Activated T-helper 1 cell treated with anti-CD3 and anti-CD28 coated beads, Interleukin-12 subunit alpha, Interleukin-12 subunit beta, Interleukin-2, Interleukin-4 antibody, amounts not matched to agents 30 ng/mL and 10 ng/mL and 1 ng/mL, durations not matched to agents 14 hours and 24 hours and 36 hours (primary cell): ENCODE measurements at regions of chr2 and their contacts with region 1.

Region 1: GRCh38 chr2:85538486-85539360 is at the start of gene MAT2A:
- DNase-seq: peak; percentile 88
- H3K4me3 Mint-ChIP-seq: peak within 1 kb of the TSS; percentile 99
- H3K27ac Mint-ChIP-seq: peak within 1 kb of the TSS; percentile 97
- H3K4me1 Mint-ChIP-seq: peaks cover 56% of the 10 kb centered on the region
- H3K27me3 Mint-ChIP-seq: no peaks in the 10 kb centered on the region
- total RNA-seq, gene MAT2A: 461 and 480 TPM in 2 replicates

Region 2: DNA sequence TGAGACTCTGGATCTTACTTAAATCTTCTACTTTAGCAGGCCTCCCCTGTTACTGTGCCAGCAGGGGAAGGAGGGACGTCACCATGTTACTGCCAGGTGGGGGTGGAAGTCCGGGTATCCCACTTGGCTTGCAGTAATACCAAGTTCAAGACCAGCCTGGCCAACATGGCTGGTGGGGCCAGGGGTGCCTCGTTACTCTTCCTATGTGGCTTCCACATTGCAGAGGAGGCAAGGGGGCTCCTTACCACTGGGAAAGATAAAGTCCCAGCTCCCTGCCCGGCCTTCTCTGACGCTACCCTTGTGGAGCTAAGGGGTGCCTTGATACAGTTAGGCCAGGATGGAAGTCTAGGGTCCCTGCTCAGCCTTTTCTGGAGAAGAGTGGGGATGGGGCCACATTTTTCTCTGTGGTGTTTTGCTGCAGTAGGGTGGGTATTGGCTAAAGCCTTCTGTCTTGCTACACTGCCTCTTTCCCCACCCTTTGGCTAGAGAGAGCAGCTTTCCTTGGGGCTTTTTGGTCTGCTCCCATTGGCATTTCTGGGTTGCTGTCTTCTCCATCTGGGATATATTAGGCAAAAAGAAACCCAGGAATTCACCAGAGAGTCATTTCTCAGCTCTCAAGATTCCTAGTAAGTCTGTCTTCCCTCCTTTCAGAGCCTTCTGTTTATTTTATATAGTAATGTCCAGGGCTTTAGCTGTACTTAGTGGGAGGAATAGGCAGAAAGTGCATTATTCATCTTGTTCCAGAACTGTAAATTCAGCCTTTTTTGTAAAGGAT is 162.2 kb before region 1 on chr2:
- intact Hi-C with region 1: no loop called
- DNase-seq: no peak
- H3K4me3 Mint-ChIP-seq: no peak overlapping the region
- H3K27ac Mint-ChIP-seq: no peak overlapping the region
- H3K4me1 Mint-ChIP-seq: no peaks in the 10 kb centered on the region
- H3K27me3 Mint-ChIP-seq: no peaks in the 10 kb centered on the region

Region 3: DNA sequence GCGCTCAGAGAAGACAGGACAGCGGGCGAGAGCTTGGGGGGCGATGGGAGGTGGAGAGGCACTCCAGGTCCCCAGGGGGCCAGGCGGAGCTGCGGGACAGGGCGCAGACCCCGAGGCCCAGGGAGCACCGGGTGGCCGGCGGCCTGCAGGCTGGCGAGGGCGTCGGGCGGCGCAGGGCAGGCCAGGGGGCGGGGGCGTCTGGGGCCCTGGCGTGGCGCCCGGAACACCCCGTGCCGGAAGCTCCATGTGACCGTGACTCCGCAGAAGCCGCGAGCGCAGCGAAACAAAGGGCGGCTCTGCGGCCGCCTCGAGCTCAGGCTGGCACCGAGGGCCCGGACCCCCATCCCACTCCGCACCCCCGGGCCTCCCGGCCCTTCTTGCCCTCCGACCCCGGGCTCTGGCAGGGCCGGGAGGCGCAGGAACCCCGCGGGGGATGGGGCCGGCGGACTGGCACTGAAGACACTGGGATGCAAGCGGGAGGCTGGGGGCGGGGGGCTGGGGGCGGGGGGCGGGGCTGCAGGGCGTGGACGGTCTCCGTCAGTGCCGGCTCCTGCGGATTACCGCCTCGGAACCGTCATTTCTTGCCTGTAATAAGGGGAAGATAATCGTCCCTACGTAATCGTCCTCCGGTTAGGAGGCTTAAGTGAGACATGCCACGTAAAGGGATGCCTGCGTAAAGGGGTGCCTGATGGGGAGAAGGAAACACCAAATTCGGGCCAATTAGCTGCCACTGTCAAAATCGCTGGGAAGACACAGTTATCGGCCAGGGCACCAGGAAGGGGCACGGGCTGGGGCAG is 101.0 kb before region 1 on chr2:
- intact Hi-C with region 1: loop called (anchors 1 kb)
- DNase-seq: peak; percentile 66
- H3K4me3 Mint-ChIP-seq: peak overlapping the region; percentile 88
- H3K27ac Mint-ChIP-seq: peak overlapping the region; percentile 97
- H3K4me1 Mint-ChIP-seq: peaks cover 26% of the 10 kb centered on the region
- H3K27me3 Mint-ChIP-seq: peaks cover 1% of the 10 kb centered on the region

Region 4: GRCh38 chr2:85561317-85561979 is 22.7 kb after region 1 on chr2 and contains the start of gene GGCX:
- intact Hi-C with region 1: loop called (anchors 1 kb)
- DNase-seq: peak; percentile 88
- H3K4me3 Mint-ChIP-seq: peak within 1 kb of the TSS; percentile 94
- H3K27ac Mint-ChIP-seq: peak within 1 kb of the TSS; percentile 81
- H3K4me1 Mint-ChIP-seq: peaks cover 36% of the 10 kb centered on the region
- H3K27me3 Mint-ChIP-seq: no peaks in the 10 kb centered on the region
- total RNA-seq, gene GGCX: 26.2 and 28.3 TPM in 2 replicates

Region 5: DNA sequence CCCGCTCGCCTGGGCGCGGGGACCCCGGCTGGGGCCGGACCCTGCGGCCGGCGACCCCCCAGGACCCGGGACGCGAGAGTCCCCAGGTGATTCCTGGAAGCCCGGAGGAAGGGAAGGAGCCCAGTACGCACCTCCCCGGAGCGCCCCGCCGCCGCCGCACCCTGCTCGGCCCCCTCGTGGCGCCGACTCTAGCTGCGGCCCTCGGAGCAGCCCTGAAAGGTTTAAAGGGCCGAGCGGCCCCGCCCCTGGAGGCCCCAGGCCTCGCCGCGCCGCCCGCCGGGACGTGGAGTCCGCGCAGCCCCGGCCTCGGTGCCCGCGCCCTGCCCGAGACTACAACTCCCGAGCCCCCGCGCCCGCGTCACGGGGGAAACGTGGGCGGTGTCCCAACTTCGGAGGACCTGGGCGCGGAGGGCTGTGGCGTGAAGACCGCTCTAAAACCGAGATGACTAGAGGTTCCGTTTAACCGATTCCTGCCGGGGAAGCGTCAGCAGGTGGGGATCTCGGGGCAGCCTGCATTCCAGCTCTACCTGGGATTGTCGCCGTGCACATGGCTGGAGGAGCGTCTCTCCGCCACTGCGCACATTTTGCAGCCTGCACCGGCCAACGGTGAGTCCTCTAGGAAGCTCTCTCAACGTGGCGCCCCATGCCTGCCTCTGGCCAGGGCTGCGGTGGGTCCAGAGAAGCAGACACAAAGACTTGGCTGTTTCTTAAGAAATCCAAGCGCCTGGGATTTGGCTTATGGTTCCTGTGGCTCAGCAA is 63.9 kb after region 1 on chr2 and contains the start of gene TMEM150A:
- intact Hi-C with region 1: loop called (anchors 2 kb)
- DNase-seq: peak; percentile 80
- H3K4me3 Mint-ChIP-seq: peak within 1 kb of the TSS; percentile 87
- H3K27ac Mint-ChIP-seq: peak within 1 kb of the TSS; percentile 35
- H3K4me1 Mint-ChIP-seq: peaks cover 11% of the 10 kb centered on the region
- H3K27me3 Mint-ChIP-seq: no peaks in the 10 kb centered on the region
- total RNA-seq, gene TMEM150A: 7.0 and 8.9 TPM in 2 replicates

Region 6: DNA sequence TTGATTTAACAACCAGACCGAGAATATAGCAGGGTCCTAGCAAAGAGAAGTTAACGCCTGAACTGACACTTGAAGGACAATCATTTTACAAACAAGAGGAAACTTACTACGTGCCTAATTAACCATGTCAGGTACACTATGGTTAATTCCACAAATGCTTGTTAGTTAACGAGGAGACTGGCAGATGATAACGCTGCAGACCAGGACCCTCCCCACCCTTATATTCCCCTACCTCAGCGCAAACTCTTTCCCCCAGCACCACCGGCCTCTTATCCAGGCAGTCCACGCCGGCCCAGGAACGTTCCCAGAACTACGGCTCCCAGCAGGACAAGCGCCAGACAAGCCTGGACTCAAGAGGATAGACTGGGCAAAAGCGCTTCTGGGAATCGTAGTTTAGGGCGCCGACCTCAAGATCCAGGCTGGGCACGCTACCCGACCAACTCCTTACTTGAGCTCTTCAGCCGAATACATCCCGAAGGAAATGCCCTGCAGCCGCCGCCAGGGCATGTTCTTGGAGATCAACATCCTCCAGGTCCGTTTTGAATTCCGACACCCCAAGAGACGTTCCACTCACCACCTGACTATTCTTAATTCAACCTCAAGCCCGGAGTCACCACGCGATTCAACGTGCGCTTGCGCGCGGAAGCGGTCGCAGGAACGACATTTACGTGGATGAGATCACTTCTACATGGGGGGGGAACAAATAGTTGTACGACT is 566.7 kb after region 1 on chr2 and contains the start of gene POLR1A:
- intact Hi-C with region 1: loop called (anchors 5 kb)
- DNase-seq: peak; percentile 84
- H3K4me3 Mint-ChIP-seq: peak within 1 kb of the TSS; percentile 91
- H3K27ac Mint-ChIP-seq: peak within 1 kb of the TSS; percentile 99
- H3K4me1 Mint-ChIP-seq: peaks cover 55% of the 10 kb centered on the region
- H3K27me3 Mint-ChIP-seq: no peaks in the 10 kb centered on the region
- total RNA-seq, gene POLR1A: 69.7 and 74.6 TPM in 2 replicates